ENCODE measurements at regions of chr4 and their contacts with region 1.

Region 1: DNA sequence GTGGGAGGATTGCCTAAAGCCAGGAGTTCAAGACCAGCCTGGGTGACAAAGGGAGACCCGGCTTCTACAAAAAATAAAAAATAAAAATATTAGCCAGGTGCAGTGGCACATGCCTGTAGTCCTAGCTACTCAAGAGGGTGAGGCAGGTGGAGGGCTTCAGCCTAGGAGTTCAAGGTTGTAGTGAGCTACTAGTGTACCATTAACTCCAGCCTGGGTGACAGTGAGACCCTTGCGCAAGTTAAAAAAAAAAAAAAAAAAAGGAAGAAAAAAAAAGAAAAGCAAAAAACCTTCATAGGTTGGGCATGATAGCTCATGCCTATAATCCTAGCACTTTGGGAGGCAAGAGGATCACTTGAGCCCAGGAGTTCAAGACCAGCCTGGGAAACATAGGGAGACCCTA is 5.8 kb downstream of the SCLT1 start:
- DNase-seq: no peak
- ATAC-seq: no peak

Region 2: GRCh38 chr4:129037093-129037492 is 50.4 kb before region 1 on chr4:
- intact Hi-C with region 1: loop called (anchors 10 kb)
- DNase-seq: no peak
- ATAC-seq: no peak